CD14-positive monocyte (primary cell): ENCODE measurements at regions of chr9 and their contacts with region 1.

Region 1: DNA sequence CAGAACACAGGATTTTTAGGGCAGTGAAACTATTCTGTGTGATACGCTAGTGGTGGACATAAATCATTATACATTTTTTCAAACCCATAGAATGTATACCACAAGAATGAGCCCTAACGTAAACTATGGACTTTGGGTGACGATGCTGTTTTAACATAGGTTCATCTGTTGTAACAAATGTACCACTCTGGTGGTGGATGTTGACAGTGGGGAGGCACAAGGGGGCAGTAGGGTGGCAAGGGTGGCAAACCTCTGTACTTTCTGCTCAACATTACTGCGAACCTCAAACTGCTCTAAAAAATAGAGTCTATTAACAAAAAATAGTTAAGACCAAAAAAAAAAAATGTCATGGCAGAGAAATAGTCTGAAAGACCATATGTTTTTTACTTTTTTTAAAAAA is 9.1 kb upstream of the MVB12B start:
- DNase-seq: peak; percentile 30 to 36 (median 30)
- H3K4me3 ChIP-seq: no peak overlapping the region
- H3K4me3 Mint-ChIP-seq: no peak overlapping the region
- H3K27ac ChIP-seq: no peak overlapping the region
- H3K27ac Mint-ChIP-seq: no peak overlapping the region
- H3K4me1 ChIP-seq: no peaks in the 10 kb centered on the region
- H3K4me1 Mint-ChIP-seq: peaks cover 6% of the 10 kb centered on the region
- H3K27me3 ChIP-seq: no peaks in the 10 kb centered on the region
- H3K27me3 Mint-ChIP-seq: peaks cover 0 to 9% (median 0%) of the 10 kb centered on the region in 3 donors
- CTCF ChIP-seq: peak; percentile 65

Region 2: GRCh38 chr9:125997196-125997823 is 320.2 kb before region 1 on chr9:
- intact Hi-C with region 1: no loop called
- DNase-seq: no peak
- H3K4me3 ChIP-seq: no peak overlapping the region
- H3K4me3 Mint-ChIP-seq: no peak overlapping the region
- H3K27ac ChIP-seq: no peak overlapping the region
- H3K27ac Mint-ChIP-seq: no peak overlapping the region
- H3K4me1 ChIP-seq: no peaks in the 10 kb centered on the region
- H3K4me1 Mint-ChIP-seq: peaks cover 5% of the 10 kb centered on the region
- H3K27me3 ChIP-seq: no peaks in the 10 kb centered on the region
- H3K27me3 Mint-ChIP-seq: peaks cover 1 to 8% (median 6%) of the 10 kb centered on the region in 3 donors
- CTCF ChIP-seq: no peak

Region 3: GRCh38 chr9:126398403-126399058 is 81.0 kb after region 1 on chr9:
- intact Hi-C with region 1: loop called (anchors 5 kb)
- DNase-seq: peak; percentile 63 to 70 (median 69)
- H3K4me3 ChIP-seq: no peak overlapping the region
- H3K4me3 Mint-ChIP-seq: no peak overlapping the region
- H3K27ac ChIP-seq: no peak overlapping the region
- H3K27ac Mint-ChIP-seq: no peak overlapping the region
- H3K4me1 ChIP-seq: peaks cover 14 to 17% of the 10 kb centered on the region in 2 donors
- H3K4me1 Mint-ChIP-seq: peaks cover 42% of the 10 kb centered on the region
- H3K27me3 ChIP-seq: no peaks in the 10 kb centered on the region
- H3K27me3 Mint-ChIP-seq: no peaks in the 10 kb centered on the region
- CTCF ChIP-seq: peak; percentile 98

Region 4: DNA sequence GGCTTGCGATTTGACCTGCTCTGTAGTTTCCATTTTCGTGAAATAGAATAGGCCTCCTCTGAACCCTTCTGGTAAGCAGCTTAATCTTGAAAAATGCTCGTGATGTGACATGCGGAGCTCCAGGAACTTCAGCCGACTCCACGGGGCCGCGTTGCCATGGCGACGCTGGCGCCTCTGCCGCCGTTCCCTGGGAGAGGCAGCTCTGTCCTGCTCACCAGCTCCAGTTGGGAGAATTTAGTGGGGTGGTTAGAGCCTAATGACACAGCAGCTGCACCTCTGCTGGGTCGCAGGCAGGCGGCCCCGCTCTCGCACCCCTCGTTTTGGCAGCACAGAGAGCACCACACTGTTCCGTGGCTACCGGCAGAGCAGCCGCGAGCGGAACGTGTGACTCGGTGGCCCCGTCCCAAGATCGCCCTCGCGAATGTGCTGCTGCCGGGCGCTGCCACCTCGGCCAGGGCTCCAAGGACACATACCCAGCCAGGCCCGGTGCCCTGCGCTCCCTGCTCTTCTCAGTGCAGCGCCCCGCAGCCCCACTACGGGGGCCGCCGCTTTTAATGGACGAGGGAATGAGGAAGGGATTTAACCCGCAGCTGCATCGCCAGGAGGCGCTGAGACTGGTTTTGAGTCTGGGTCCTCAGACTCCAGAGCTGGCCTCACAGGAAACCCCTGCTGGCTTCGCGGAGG is 165.0 kb after region 1 on chr9:
- intact Hi-C with region 1: loop called in 1 of 2 experiments (anchors 5 kb)
- DNase-seq: no peak
- H3K4me3 ChIP-seq: peak overlapping the region in 2 of 3 experiments; percentile 8 to 68
- H3K4me3 Mint-ChIP-seq: peak overlapping the region; percentile 52 to 78
- H3K27ac ChIP-seq: no peak overlapping the region
- H3K27ac Mint-ChIP-seq: no peak overlapping the region
- H3K4me1 ChIP-seq: peaks cover 11 to 40% of the 10 kb centered on the region in 2 donors
- H3K4me1 Mint-ChIP-seq: peaks cover 38% of the 10 kb centered on the region
- H3K27me3 ChIP-seq: no peaks in the 10 kb centered on the region
- H3K27me3 Mint-ChIP-seq: no peaks in the 10 kb centered on the region
- CTCF ChIP-seq: no peak